ENCODE measurements at regions of chr5 and their contacts with region 1.

Region 1: GRCh38 chr5:54867310-54867944 is 118.0 kb downstream of the ESM1 start:
- DNase-seq: peak in 2 of 5 donors; percentile 51 to 52
- H3K4me3 ChIP-seq: peak overlapping the region; percentile 10
- H3K4me3 Mint-ChIP-seq: peak overlapping the region in 6 of 7 donors; percentile 0 to 69 (median 40)
- H3K27ac ChIP-seq: no peak overlapping the region
- H3K27ac Mint-ChIP-seq: peak overlapping the region in 1 of 8 donors; percentile 4
- H3K4me1 ChIP-seq: peaks cover 6% of the 10 kb centered on the region
- H3K4me1 Mint-ChIP-seq: peaks cover 4 to 9% (median 6%) of the 10 kb centered on the region in 3 donors
- H3K27me3 ChIP-seq: no peaks in the 10 kb centered on the region
- H3K27me3 Mint-ChIP-seq: peaks cover 10 to 22% of the 10 kb centered on the region in 2 donors

Region 2: GRCh38 chr5:54883374-54884212 is 16.2 kb after region 1 on chr5:
- CTCF ChIA-PET with region 1: interaction called, 11 read pairs
- POLR2A ChIA-PET with region 1: no interaction called
- DNase-seq: peak in 1 of 5 donors; percentile 4
- H3K4me3 ChIP-seq: no peak overlapping the region
- H3K4me3 Mint-ChIP-seq: peak overlapping the region in 6 of 7 donors; percentile 48 to 80 (median 70)
- H3K27ac ChIP-seq: no peak overlapping the region
- H3K27ac Mint-ChIP-seq: no peak overlapping the region
- H3K4me1 ChIP-seq: no peaks in the 10 kb centered on the region
- H3K4me1 Mint-ChIP-seq: peaks cover 11 to 23% (median 16%) of the 10 kb centered on the region in 3 donors
- H3K27me3 ChIP-seq: peaks cover 8% of the 10 kb centered on the region
- H3K27me3 Mint-ChIP-seq: peaks cover 26 to 68% of the 10 kb centered on the region in 2 donors

Region 3: DNA sequence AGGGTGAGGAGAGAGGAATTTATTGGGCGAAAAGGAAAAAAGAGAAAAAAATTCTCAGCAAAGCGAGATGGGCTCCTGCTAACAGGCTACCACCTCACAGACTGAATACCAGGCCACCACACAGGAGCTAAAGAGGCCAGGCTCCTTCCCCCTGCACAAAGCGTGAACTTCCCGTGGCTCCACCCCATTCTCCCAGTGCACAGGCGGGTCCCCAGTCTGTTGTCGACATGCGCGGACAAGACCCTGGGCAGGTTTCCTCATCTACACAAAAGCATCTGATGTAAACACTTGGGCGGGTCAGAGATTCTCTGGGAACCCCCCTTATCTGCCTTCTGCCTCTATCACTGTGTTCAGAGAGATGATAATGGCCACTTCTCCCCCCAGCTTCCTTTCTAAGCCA is 1017.9 kb after region 1 on chr5:
- CTCF ChIA-PET with region 1: no interaction called
- POLR2A ChIA-PET with region 1: no interaction called
- DNase-seq: no peak
- H3K4me3 ChIP-seq: no peak overlapping the region
- H3K4me3 Mint-ChIP-seq: no peak overlapping the region
- H3K27ac ChIP-seq: no peak overlapping the region
- H3K27ac Mint-ChIP-seq: peak overlapping the region in 1 of 8 donors; percentile 60
- H3K4me1 ChIP-seq: no peaks in the 10 kb centered on the region
- H3K4me1 Mint-ChIP-seq: peaks cover 0 to 2% (median 0%) of the 10 kb centered on the region in 3 donors
- H3K27me3 ChIP-seq: no peaks in the 10 kb centered on the region
- H3K27me3 Mint-ChIP-seq: peaks cover 5 to 6% of the 10 kb centered on the region in 2 donors